HepG2 (cell line): ENCODE measurements at regions of chr1 and their contacts with region 1.

Region 1: DNA sequence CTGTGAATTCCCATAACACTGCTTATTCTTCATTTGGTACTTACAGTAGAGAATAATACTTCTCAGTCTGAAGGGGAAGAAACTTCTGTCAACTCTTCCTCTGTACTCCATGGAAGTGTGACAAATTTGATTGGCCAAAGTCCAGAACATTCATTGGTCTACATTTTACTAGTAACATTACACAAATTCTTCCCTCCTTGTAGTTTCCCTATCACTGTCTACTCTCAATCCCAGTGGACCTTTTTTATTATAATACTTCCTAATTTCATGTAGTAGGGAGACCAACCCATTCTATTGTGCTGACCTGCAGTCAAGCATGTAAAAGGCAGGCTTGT is 74.7 kb downstream of the ALG6 start:
- DNase-seq: no peak
- ATAC-seq: peak; percentile 43
- H3K4me3 ChIP-seq: no peak overlapping the region
- H3K27ac ChIP-seq: no peak overlapping the region
- H3K4me1 ChIP-seq: no peaks in the 10 kb centered on the region
- H3K27me3 ChIP-seq: no peaks in the 10 kb centered on the region
- CTCF ChIP-seq: no peak
- EP300 ChIP-seq: no peak
- POLR2A ChIP-seq: no peak
- RAD21 ChIP-seq: no peak

Region 2: DNA sequence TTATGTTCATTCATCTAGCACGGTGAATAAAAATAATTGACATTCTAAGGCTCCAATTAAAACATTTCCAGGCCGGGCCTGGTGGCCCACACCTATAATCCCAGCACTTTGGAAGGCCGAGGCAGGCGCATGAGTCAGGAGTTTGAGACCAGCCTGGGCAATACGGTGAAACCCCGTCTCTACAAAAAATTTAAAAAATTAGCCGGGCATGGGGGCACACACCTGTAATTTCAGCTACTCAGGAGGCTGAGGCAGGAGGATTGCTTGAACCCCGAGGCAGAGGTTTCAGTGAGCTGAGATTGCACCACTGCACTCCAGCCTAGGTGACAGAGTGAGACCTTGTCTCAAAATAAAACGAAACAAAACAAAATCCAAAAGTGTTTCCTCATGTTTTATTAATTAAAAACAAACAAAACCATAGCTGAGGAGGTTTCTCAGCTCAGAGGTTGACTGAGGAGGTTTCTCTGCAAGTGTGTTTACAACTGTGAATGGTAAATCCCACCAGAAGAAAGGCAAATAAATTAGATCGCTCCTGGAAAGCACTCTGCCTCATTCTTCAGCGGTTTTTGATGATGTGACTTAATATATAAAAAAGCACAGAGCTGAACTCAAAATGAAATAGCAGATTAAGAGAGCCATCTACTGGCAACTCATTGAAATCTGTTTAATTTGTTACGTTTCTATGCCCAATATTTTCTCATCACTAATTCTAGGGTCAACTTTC is 695.9 kb before region 1 on chr1:
- CTCF ChIA-PET with region 1: no interaction called
- POLR2A ChIA-PET with region 1: no interaction called
- in situ Hi-C with region 1: no loop called
- intact Hi-C with region 1: no loop called
- DNase-seq: peak; percentile 48
- ATAC-seq: no peak; the same call in 2 of the 3 replicates
- H3K4me3 ChIP-seq: no peak overlapping the region
- H3K27ac ChIP-seq: no peak overlapping the region
- H3K4me1 ChIP-seq: peaks cover 10% of the 10 kb centered on the region; the same call in 1 of the 2 replicates
- H3K27me3 ChIP-seq: no peaks in the 10 kb centered on the region
- CTCF ChIP-seq: peak; percentile 64
- EP300 ChIP-seq: no peak
- POLR2A ChIP-seq: no peak
- RAD21 ChIP-seq: peak; percentile 71

Region 3: DNA sequence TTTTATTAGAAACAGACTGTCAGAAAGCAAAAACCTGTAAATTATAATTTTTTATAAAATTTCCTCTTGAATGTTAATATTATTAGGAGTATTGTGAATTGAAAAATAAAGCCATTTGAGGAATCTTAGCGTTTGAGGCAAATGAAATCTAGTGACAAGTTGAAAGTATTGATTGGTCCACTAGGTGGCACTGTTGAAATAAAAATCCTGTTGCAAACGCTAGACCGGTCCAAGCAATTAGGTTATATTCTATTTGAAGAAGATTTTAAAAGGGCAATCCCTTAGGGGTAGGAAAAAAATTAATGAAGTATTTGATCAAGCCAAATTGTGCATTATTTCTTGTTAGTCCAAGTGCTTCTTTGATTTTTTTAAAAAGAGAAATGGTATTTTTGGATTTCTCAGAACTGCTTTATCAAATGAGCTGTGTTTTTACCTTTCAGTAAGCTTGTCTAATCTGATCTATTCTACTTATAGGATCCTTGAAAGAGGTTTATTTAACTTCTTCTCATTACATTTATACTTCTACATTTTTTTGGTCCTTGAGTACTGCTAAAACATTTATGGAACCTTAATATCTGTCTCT is 600.4 kb before region 1 on chr1:
- CTCF ChIA-PET with region 1: no interaction called
- POLR2A ChIA-PET with region 1: no interaction called
- in situ Hi-C with region 1: no loop called
- intact Hi-C with region 1: loop called (anchors 5 kb)
- DNase-seq: peak; percentile 54
- ATAC-seq: peak; percentile 57; the same call in 1 of the 3 replicates
- H3K4me3 ChIP-seq: no peak overlapping the region
- H3K27ac ChIP-seq: no peak overlapping the region
- H3K4me1 ChIP-seq: no peaks in the 10 kb centered on the region
- H3K27me3 ChIP-seq: no peaks in the 10 kb centered on the region; a peak in 1 of 5 replicates
- CTCF ChIP-seq: peak; percentile 74
- EP300 ChIP-seq: no peak
- POLR2A ChIP-seq: no peak
- RAD21 ChIP-seq: peak; percentile 44; the same call in 1 of the 2 replicates

Region 4: DNA sequence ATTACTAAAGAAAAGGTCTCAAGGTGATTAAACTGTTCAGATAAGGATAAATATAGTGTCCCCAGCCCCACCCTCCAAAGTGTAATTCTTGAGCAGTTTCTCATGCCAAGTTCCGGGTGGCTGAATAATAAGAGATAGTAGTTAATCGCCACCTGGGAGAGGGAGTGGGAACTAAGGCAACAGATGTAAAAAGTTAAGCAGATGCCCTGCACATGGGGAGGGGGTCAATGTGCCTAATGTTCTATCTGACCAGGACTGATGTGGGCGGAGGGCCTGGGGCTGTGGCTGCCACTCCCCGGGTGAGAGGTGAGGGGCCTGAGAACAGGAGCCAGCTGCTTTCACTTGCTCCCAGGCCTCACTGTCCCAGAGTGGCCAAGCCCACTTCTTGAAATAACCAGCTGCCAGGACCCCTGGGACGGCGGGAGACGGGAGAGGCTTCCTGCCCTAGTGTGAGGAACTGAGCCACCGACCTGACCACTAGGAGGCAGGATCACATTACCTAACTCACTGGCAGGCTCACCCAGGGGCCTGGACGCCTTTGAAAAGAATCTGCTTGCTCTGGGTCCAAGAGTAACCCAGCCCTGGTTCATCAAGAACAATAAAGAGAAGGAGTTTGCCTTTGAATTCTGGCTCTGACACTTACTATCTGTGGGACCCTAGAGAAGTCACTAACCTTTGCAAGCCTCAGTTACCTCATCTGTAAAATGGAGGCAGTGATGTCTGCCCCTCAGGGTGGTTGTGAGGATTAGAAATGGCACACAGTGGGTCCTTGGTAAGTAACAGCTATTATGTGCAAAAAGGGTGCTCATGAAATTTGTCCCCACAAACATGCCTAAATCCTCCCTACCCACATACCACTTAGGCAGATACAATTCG is 479.0 kb before region 1 on chr1:
- CTCF ChIA-PET with region 1: no interaction called
- POLR2A ChIA-PET with region 1: no interaction called
- in situ Hi-C with region 1: no loop called
- intact Hi-C with region 1: loop called (anchors 2 kb)
- DNase-seq: peak; percentile 30
- ATAC-seq: peak; percentile 96
- H3K4me3 ChIP-seq: no peak overlapping the region
- H3K27ac ChIP-seq: no peak overlapping the region
- H3K4me1 ChIP-seq: no peaks in the 10 kb centered on the region
- H3K27me3 ChIP-seq: no peaks in the 10 kb centered on the region
- CTCF ChIP-seq: peak; percentile 79
- EP300 ChIP-seq: no peak
- POLR2A ChIP-seq: no peak
- RAD21 ChIP-seq: 0 out of 2 replicates have a peak, but pooled peaks have one; percentile 33

Region 5: DNA sequence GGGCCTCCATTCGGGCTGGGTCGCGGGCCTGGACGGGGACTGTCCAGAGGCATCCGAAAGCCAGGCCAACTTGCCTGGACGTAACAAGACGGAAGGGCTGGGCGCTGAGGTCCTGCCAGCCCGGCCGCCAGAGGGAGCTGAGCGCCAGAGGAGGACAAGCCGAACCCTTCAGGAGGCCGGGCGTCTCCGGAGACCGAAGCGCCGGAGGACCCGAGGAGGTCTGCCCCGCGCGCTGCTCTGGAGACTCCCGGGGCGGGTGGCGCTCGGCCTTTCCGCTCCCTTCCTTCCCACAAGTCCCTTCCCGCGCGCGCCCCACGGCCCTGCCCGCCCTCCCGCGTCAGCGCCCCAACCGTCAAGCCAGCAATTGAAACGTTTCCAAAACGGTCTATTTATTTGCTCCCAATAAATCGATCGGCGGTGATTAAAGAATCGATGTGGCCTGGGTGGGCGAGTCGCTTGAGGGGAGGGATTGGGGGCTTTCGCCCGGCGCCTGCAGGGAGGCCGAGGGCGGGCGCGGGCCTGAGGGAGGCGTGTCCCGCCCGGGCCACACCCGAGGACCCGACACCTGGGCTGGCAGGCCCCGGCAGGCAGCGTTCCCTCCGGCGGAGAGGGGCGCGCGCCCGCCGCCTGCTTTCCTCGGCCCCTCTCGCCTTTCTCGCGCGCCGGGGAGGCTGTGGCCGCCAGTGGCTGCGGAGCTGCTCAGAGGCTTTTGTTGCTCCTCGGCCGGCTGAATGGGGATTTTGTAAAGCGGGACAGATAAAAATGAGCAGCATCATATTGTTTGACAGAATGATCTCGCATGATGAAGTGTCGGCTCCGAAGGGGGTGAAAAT is 124.9 kb before region 1 on chr1:
- CTCF ChIA-PET with region 1: interaction called, 11 read pairs
- POLR2A ChIA-PET with region 1: no interaction called
- in situ Hi-C with region 1: loop called (anchors 5 kb)
- intact Hi-C with region 1: loop called (anchors 2 kb)
- DNase-seq: peak; percentile 41
- ATAC-seq: peak; percentile 95
- H3K4me3 ChIP-seq: peak overlapping the region; percentile 64 to 73 (median 67)
- H3K27ac ChIP-seq: no peak overlapping the region
- H3K4me1 ChIP-seq: peaks cover 8% of the 10 kb centered on the region; the same call in 1 of the 2 replicates
- H3K27me3 ChIP-seq: peaks cover 9 to 50% of the 10 kb centered on the region in 2 experiments
- CTCF ChIP-seq: peak; percentile 87
- EP300 ChIP-seq: no peak
- POLR2A ChIP-seq: no peak
- RAD21 ChIP-seq: peak; percentile 59; the same call in 1 of the 2 replicates

Region 6: GRCh38 chr1:63327417-63328139 is 114.5 kb before region 1 on chr1:
- CTCF ChIA-PET with region 1: interaction called, 4 read pairs
- POLR2A ChIA-PET with region 1: no interaction called
- in situ Hi-C with region 1: no loop called
- intact Hi-C with region 1: loop called (anchors 1 kb)
- DNase-seq: peak; percentile 24
- ATAC-seq: peak; percentile 92
- H3K4me3 ChIP-seq: no peak overlapping the region
- H3K27ac ChIP-seq: no peak overlapping the region
- H3K4me1 ChIP-seq: peaks cover 22% of the 10 kb centered on the region
- H3K27me3 ChIP-seq: peaks cover 6 to 62% of the 10 kb centered on the region in 2 experiments
- CTCF ChIP-seq: peak; percentile 88
- EP300 ChIP-seq: no peak
- POLR2A ChIP-seq: no peak
- RAD21 ChIP-seq: peak; percentile 19; the same call in 1 of the 2 replicates

Region 7: DNA sequence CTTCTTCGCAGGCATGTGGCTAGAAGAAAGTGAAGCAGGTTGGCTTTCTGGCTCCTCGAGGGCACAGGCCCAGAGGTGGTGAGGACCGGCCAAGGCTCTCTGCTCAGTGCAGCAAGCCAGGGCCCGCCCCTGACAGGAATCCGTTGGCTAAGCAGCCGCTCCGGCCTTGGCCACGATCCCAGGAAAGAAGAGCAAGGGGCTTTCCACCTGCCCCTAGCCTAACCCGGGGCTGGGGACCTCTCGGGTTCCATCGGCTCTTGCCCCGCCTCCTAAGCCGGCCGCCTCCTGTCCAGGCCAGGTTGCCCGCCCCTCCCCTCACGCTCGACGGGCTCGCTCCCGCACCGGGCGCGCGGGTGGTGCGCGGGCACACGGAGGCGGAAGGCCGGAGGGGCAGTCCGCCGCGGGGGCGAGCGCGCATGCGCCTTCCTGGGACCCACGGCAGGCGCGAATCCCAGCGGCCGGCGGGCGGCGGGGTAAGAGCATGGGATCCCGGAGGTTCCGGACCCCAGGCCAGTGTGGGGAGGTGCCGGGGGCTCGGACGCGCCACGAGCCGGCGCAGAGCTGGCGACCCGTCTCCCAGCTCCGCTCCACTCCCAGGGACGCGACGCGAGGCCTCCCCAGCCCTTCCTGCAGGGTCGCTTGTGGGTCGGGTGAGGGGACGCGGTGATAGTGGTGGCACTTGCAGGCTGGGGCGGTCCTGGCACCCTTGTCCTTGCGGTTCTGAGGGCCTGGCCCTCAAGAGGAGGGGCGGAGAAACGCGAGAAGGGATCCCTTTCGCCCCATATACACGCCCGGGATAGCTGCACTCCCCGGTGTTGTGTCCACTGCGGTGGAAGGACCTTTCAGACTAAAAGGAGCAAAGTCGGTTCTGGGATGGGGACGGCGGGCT is 74.6 kb before region 1 on chr1 and contains the start of gene ALG6:
- CTCF ChIA-PET with region 1: interaction called, 6 read pairs
- POLR2A ChIA-PET with region 1: no interaction called
- in situ Hi-C with region 1: no loop called
- intact Hi-C with region 1: loop called (anchors 1 kb)
- DNase-seq: peak; percentile 86
- ATAC-seq: peak; percentile 96
- H3K4me3 ChIP-seq: peak within 1 kb of the TSS; percentile 79 to 91 (median 82)
- H3K27ac ChIP-seq: peak within 1 kb of the TSS; percentile 73
- H3K4me1 ChIP-seq: peaks cover 15% of the 10 kb centered on the region; the same call in 1 of the 2 replicates
- H3K27me3 ChIP-seq: no peaks in the 10 kb centered on the region
- CTCF ChIP-seq: peak; percentile 79
- EP300 ChIP-seq: no peak
- POLR2A ChIP-seq: peak; percentile 90 to 94
- RAD21 ChIP-seq: peak; percentile 68; the same call in 1 of the 2 replicates
- total RNA-seq, gene ALG6: 4.5 and 8.1 TPM in 2 replicates